GM12878 (cell line): ENCODE measurements at regions of chr11 and their contacts with region 1.

Region 1: DNA sequence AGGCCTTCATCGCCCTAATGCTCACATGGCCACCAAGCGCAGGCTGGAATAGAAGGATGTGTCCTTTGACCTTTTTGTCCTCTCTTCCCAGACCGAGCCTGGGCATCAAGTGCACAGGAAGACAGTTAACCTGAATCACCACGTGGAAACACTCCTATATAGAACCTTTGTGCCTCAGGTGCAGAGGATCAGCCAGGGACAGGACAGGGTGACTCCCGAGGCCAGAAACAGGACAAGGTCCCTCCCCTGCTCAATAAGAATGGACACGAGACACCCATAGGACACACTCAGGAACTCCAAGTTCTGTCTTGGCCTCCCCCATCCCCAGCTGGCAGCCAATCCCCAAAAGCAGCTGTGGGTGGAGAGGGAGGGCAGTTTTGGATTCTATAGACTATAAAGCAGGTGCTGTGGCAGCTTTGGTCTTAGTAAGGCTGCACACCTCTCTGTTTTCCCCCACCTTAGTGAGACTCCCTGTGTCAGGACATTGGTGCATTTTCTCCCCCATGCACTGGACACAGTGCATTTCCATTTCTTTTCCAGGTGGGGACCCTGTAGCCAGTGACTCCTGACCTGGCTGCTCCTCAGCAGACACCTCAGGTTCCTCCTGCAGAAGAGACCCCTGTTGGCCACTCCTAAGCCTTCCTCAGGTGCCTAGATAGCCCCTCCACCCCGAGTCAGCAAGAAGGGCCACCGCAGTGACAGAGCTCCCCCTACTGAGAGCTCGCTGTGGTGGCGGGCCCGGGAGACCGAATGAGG is 43.6 kb upstream of the POU2AF1 start:
- DNase-seq: no peak
- ATAC-seq: peak; percentile 93
- H3K4me3 ChIP-seq: no peak overlapping the region
- H3K27ac ChIP-seq: no peak overlapping the region
- H3K4me1 ChIP-seq: peaks cover 39% of the 10 kb centered on the region
- H3K27me3 ChIP-seq: no peaks in the 10 kb centered on the region
- CTCF ChIP-seq: peak; percentile 85 to 98 (median 94)
- EP300 ChIP-seq: no peak
- POLR2A ChIP-seq: no peak
- RAD21 ChIP-seq: peak; percentile 100

Region 2: GRCh38 chr11:110349138-110349996 is 1073.3 kb before region 1 on chr11:
- CTCF ChIA-PET with region 1: no interaction called
- POLR2A ChIA-PET with region 1: no interaction called
- RAD21 ChIA-PET with region 1: no interaction called
- SMC1A ChIA-PET with region 1: no interaction called
- in situ Hi-C with region 1: no loop called
- intact Hi-C with region 1: loop called (anchors 5 kb)
- DNase-seq: peak; percentile 94
- ATAC-seq: peak; percentile 86
- H3K4me3 ChIP-seq: peak overlapping the region; percentile 38; the same call in 1 of the 2 replicates
- H3K27ac ChIP-seq: peak overlapping the region; percentile 96
- H3K4me1 ChIP-seq: peaks cover 43% of the 10 kb centered on the region
- H3K27me3 ChIP-seq: no peaks in the 10 kb centered on the region
- CTCF ChIP-seq: peak in 1 of 3 experiments; percentile 33; a peak in 2 of 6 replicates
- EP300 ChIP-seq: peak; percentile 94 to 99
- POLR2A ChIP-seq: peak; percentile 30; the same call in 1 of the 2 replicates
- RAD21 ChIP-seq: peak; percentile 51

Region 3: GRCh38 chr11:111039982-111040381 is 382.7 kb before region 1 on chr11:
- CTCF ChIA-PET with region 1: no interaction called
- POLR2A ChIA-PET with region 1: no interaction called
- RAD21 ChIA-PET with region 1: no interaction called
- SMC1A ChIA-PET with region 1: no interaction called
- in situ Hi-C with region 1: no loop called
- intact Hi-C with region 1: no loop called
- DNase-seq: no peak
- ATAC-seq: no peak
- H3K4me3 ChIP-seq: no peak overlapping the region
- H3K27ac ChIP-seq: no peak overlapping the region
- H3K4me1 ChIP-seq: no peaks in the 10 kb centered on the region
- H3K27me3 ChIP-seq: no peaks in the 10 kb centered on the region
- CTCF ChIP-seq: no peak
- EP300 ChIP-seq: no peak
- POLR2A ChIP-seq: no peak
- RAD21 ChIP-seq: no peak

Region 4: GRCh38 chr11:111283945-111284481 is 138.7 kb before region 1 on chr11:
- CTCF ChIA-PET with region 1: interaction called, 680 read pairs
- POLR2A ChIA-PET with region 1: interaction called, 10 read pairs
- RAD21 ChIA-PET with region 1: interaction called, 322 read pairs
- SMC1A ChIA-PET with region 1: interaction called, 455 read pairs
- in situ Hi-C with region 1: loop called (anchors 5 kb)
- intact Hi-C with region 1: loop called (anchors 1 kb)
- DNase-seq: no peak
- ATAC-seq: peak; percentile 30; the same call in 2 of the 3 replicates
- H3K4me3 ChIP-seq: no peak overlapping the region
- H3K27ac ChIP-seq: no peak overlapping the region
- H3K4me1 ChIP-seq: no peaks in the 10 kb centered on the region
- H3K27me3 ChIP-seq: peaks cover 0 to 3% of the 10 kb centered on the region in 2 experiments; a peak in 2 of 4 replicates
- CTCF ChIP-seq: no peak
- EP300 ChIP-seq: no peak
- POLR2A ChIP-seq: no peak
- RAD21 ChIP-seq: no peak

Region 5: DNA sequence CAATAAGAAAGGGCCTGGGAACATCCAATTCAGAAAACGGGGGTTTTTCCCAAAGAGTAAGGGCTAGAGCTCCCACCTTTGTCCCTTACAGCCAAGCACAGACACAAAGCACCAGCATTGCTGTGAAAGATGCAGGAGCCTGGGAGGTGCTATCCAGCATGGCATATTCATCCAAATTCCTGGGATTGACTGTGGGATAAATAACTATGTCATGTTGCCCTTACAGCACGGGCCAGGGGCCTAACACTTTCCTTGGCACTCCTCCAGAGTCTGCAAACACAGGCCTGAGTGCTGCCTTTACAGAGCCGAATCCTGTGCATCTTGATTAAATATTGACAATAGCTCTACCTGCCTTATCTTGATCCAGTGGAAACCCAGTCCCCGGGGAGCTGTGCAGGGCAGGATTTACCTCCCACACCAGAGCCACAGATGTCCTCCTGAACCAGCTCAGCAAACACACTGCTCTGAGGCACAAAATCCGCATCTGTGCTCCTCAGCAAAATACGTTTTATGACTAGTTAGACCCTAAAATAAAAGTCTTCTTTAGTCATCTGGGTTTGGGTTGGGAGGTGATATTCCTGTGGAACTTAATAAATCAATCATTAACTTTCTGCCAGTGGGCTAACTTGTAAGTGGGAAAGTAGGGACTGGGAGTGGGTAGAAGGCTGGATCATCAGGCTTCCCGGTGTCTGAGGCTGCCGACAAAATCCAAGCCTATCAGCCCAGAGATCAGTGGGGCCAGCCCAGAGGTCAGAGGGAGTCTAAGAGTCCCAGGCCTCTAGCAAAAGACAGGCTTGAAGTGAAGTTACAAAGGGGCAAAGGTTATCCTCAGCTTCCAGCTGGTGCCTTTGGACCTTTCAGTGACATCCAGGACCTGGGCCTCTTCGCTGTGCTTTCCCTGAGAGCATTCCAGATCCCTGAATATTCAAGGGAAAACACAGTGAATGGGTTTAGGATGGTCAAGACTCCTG is 87.9 kb before region 1 on chr11:
- CTCF ChIA-PET with region 1: interaction called, 27 read pairs
- POLR2A ChIA-PET with region 1: interaction called, 4 read pairs
- RAD21 ChIA-PET with region 1: interaction called, 4 read pairs
- SMC1A ChIA-PET with region 1: interaction called, 5 read pairs
- in situ Hi-C with region 1: no loop called
- intact Hi-C with region 1: no loop called
- DNase-seq: no peak
- ATAC-seq: no peak
- H3K4me3 ChIP-seq: no peak overlapping the region
- H3K27ac ChIP-seq: no peak overlapping the region
- H3K4me1 ChIP-seq: peaks cover 3% of the 10 kb centered on the region; the same call in 1 of the 2 replicates
- H3K27me3 ChIP-seq: no peaks in the 10 kb centered on the region
- CTCF ChIP-seq: no peak
- EP300 ChIP-seq: no peak
- POLR2A ChIP-seq: no peak
- RAD21 ChIP-seq: no peak

Region 6: GRCh38 chr11:111367411-111368284 is 55.0 kb before region 1 on chr11:
- CTCF ChIA-PET with region 1: interaction called, 213 read pairs
- POLR2A ChIA-PET with region 1: interaction called, 415 read pairs
- RAD21 ChIA-PET with region 1: interaction called, 657 read pairs
- SMC1A ChIA-PET with region 1: interaction called, 972 read pairs
- in situ Hi-C with region 1: loop called (anchors 5 kb)
- intact Hi-C with region 1: loop called (anchors 1 kb)
- DNase-seq: peak; percentile 80
- ATAC-seq: peak; percentile 60
- H3K4me3 ChIP-seq: peak overlapping the region; percentile 67
- H3K27ac ChIP-seq: peak overlapping the region; percentile 97
- H3K4me1 ChIP-seq: peaks cover 91% of the 10 kb centered on the region
- H3K27me3 ChIP-seq: no peaks in the 10 kb centered on the region
- CTCF ChIP-seq: no peak
- EP300 ChIP-seq: peak; percentile 78 to 92
- POLR2A ChIP-seq: peak; percentile 50; the same call in 1 of the 2 replicates
- RAD21 ChIP-seq: 0 out of 2 replicates have a peak, but pooled peaks have one; percentile 4

Region 7: GRCh38 chr11:111408789-111409727 is 13.6 kb before region 1 on chr11:
- CTCF ChIA-PET with region 1: interaction called, 143 read pairs
- POLR2A ChIA-PET with region 1: interaction called, 4 read pairs
- RAD21 ChIA-PET with region 1: interaction called, 77 read pairs
- SMC1A ChIA-PET with region 1: interaction called, 50 read pairs
- in situ Hi-C with region 1: no loop called
- intact Hi-C with region 1: no loop called
- DNase-seq: peak; percentile 91
- ATAC-seq: peak; percentile 69
- H3K4me3 ChIP-seq: peak overlapping the region; percentile 14; the same call in 1 of the 2 replicates
- H3K27ac ChIP-seq: peak overlapping the region; percentile 92
- H3K4me1 ChIP-seq: peaks cover 64% of the 10 kb centered on the region
- H3K27me3 ChIP-seq: no peaks in the 10 kb centered on the region
- CTCF ChIP-seq: no peak
- EP300 ChIP-seq: peak in 1 of 2 experiments; percentile 29; a peak in 1 of 4 replicates
- POLR2A ChIP-seq: no peak
- RAD21 ChIP-seq: no peak

Region 8: GRCh38 chr11:111851636-111852035 is 429.0 kb after region 1 on chr11:
- CTCF ChIA-PET with region 1: no interaction called
- POLR2A ChIA-PET with region 1: no interaction called
- RAD21 ChIA-PET with region 1: no interaction called
- SMC1A ChIA-PET with region 1: no interaction called
- in situ Hi-C with region 1: no loop called
- intact Hi-C with region 1: no loop called
- DNase-seq: no peak
- ATAC-seq: no peak
- H3K4me3 ChIP-seq: no peak overlapping the region
- H3K27ac ChIP-seq: no peak overlapping the region
- H3K4me1 ChIP-seq: no peaks in the 10 kb centered on the region
- H3K27me3 ChIP-seq: no peaks in the 10 kb centered on the region
- CTCF ChIP-seq: peak in 2 of 3 experiments; percentile 34 to 39; a peak in 3 of 6 replicates
- EP300 ChIP-seq: no peak
- POLR2A ChIP-seq: no peak
- RAD21 ChIP-seq: peak; percentile 34; the same call in 1 of the 2 replicates